Activated T-helper 2 cell treated with anti-CD3 and anti-CD28 coated beads, Interferon-gamma antibody, Interleukin-2, Interleukin-4, amounts not matched to agents 10 μg/mL and 5 μg/mL and 100 μg/mL, durations not matched to agents 14 hours and 24 hours and 36 hours (primary cell): ENCODE measurements at regions of chr2 and their contacts with region 1.

Region 1: GRCh38 chr2:118130385-118130784 is 42.1 kb downstream of the INSIG2 start:
- DNase-seq: no peak
- H3K4me3 Mint-ChIP-seq: no peak overlapping the region
- H3K27ac Mint-ChIP-seq: peak overlapping the region; percentile 60
- H3K4me1 Mint-ChIP-seq: peaks cover 21% of the 10 kb centered on the region
- H3K27me3 Mint-ChIP-seq: peaks cover 17% of the 10 kb centered on the region

Region 2: GRCh38 chr2:118103951-118104940 is 26.1 kb before region 1 on chr2:
- intact Hi-C with region 1: loop called (anchors 2 kb)
- DNase-seq: no peak
- H3K4me3 Mint-ChIP-seq: no peak overlapping the region
- H3K27ac Mint-ChIP-seq: no peak overlapping the region
- H3K4me1 Mint-ChIP-seq: peaks cover 25% of the 10 kb centered on the region
- H3K27me3 Mint-ChIP-seq: no peaks in the 10 kb centered on the region

Region 3: DNA sequence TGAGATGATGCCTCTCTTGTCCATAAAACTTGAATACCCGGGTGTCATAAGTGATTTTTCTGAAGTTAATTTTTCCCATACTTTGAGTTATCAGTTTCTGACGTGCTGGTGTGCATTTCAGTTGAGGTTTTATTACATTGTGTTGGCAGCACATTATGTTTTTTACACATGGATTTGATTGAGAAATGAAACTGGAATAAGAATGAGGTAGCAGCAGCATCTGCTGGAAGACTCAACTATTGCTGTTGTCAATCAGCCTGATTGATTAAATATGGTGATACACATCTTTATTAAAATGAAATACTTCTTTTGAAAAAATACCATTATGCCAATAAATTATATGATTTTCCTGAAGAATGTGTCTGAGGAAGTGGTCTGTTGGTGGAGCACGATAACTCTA is 18.4 kb after region 1 on chr2:
- intact Hi-C with region 1: loop called (anchors 2 kb)
- DNase-seq: no peak
- H3K4me3 Mint-ChIP-seq: no peak overlapping the region
- H3K27ac Mint-ChIP-seq: no peak overlapping the region
- H3K4me1 Mint-ChIP-seq: peaks cover 5% of the 10 kb centered on the region
- H3K27me3 Mint-ChIP-seq: peaks cover 2% of the 10 kb centered on the region

Region 4: GRCh38 chr2:118177884-118178283 is 47.5 kb after region 1 on chr2:
- intact Hi-C with region 1: loop called (anchors 2 kb)
- DNase-seq: no peak
- H3K4me3 Mint-ChIP-seq: no peak overlapping the region
- H3K27ac Mint-ChIP-seq: peak overlapping the region; percentile 96
- H3K4me1 Mint-ChIP-seq: peaks cover 34% of the 10 kb centered on the region
- H3K27me3 Mint-ChIP-seq: no peaks in the 10 kb centered on the region

Region 5: GRCh38 chr2:118269408-118270051 is 139.1 kb after region 1 on chr2:
- intact Hi-C with region 1: no loop called
- DNase-seq: no peak
- H3K4me3 Mint-ChIP-seq: no peak overlapping the region
- H3K27ac Mint-ChIP-seq: no peak overlapping the region
- H3K4me1 Mint-ChIP-seq: no peaks in the 10 kb centered on the region
- H3K27me3 Mint-ChIP-seq: peaks cover 5% of the 10 kb centered on the region